Left ventricle myocardium inferior (tissue), 1 donor: ENCODE measurements at regions of chr3 and their contacts with region 1.

Region 1: DNA sequence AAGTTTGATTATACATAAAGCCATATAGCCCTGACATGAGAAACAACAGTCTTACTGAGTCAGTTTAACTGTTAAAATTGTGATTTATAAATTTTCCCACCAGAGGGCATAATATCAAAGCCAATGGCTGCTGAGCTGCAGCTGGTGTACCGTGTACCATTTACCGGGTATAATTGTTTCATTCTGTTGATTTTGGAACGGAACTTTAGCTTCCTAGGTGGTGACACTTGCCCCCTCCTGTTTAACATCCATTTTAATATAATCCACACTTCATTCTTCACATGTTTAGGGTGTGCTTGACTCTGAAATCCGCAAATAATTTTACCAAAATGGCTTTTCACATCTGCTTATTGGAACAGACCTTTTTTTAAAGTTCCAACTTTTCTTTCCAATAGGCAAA is 72.8 kb downstream of the SLC9A9 start:
- DNase-seq: no peak
- H3K4me3 ChIP-seq: peak overlapping the region; percentile 21
- H3K27ac ChIP-seq: no peak overlapping the region
- H3K4me1 ChIP-seq: no peaks in the 10 kb centered on the region
- H3K27me3 ChIP-seq: no peaks in the 10 kb centered on the region
- CTCF ChIP-seq: peak; percentile 58

Region 2: DNA sequence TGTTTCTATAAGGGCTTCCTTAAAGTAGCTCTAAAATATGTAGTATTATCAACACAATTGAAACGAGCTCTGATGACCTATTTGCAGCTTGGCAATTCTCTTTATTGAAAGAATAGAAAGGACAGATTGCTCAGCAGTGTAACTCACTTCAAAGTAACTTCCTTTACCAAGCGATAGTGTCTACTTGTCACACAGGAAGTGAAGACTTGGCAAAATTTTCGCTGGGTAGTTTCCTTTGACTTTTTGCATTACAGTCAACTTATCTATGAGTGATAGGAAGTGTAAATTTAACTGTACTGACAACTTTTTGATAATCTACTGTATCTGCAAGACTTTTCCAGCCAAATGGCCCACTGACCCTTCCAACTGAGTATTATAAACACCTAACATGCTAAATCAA is 50.1 kb after region 1 on chr3:
- intact Hi-C with region 1: no loop called
- DNase-seq: no peak
- H3K4me3 ChIP-seq: no peak overlapping the region
- H3K27ac ChIP-seq: no peak overlapping the region
- H3K4me1 ChIP-seq: peaks cover 1% of the 10 kb centered on the region
- H3K27me3 ChIP-seq: no peaks in the 10 kb centered on the region
- CTCF ChIP-seq: no peak

Region 3: GRCh38 chr3:143951351-143951971 is 176.0 kb after region 1 on chr3:
- intact Hi-C with region 1: loop called (anchors 10 kb)
- DNase-seq: no peak
- H3K4me3 ChIP-seq: no peak overlapping the region
- H3K27ac ChIP-seq: no peak overlapping the region
- H3K4me1 ChIP-seq: no peaks in the 10 kb centered on the region
- H3K27me3 ChIP-seq: no peaks in the 10 kb centered on the region
- CTCF ChIP-seq: peak; percentile 70